Transverse colon (tissue), 4 donors: ENCODE measurements at regions of chr1 and their contacts with region 1.

Region 1: GRCh38 chr1:95043141-95043980 is 29.4 kb downstream of the ALG14 start:
- DNase-seq: peak; percentile 87
- H3K4me3 ChIP-seq: no peak overlapping the region
- H3K27ac ChIP-seq: peak overlapping the region; percentile 65 to 83 (median 75)
- H3K4me1 ChIP-seq: peaks cover 10 to 29% (median 14%) of the 10 kb centered on the region in 4 donors
- H3K27me3 ChIP-seq: no peaks in the 10 kb centered on the region
- CTCF ChIP-seq: peak; percentile 97 to 100 (median 99)
- EP300 ChIP-seq: no peak
- POLR2A ChIP-seq: no peak

Region 2: DNA sequence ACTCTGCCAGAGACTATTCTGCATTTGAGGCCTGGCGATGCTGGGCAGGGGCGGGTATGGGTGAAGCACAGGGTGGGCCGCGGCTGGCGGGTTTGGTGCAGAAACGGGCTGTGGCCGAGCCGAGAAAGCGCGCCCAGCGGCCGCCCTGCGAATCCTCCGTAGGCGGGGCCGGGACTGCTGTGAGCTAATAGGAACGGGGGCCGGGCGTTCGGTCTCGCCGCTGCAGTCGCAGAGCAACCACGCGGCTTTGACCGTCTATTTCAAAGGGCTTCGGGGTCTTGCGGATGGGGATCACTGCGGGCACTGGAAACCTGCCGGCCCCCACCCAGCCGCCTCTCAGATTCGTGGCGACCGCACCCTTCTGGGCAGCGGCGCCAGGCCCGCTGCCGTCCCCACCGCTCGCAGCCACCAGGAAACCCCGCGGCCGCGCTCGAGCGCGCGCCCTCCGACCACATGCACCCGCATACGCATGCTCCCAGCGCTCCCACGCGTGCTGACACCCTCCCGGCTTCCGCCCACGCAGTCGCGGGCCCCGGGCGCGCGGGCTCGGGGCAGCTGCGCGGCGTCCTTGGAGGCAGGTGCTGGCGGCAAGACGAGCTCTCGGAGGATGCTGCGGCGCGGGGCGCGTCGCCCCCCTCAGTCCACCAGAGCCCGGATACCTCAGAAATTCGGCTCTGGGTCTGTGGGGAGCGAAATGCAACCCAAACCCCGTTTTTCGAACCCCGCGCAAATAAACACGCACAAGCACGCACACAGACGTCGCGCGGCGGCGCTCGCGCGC is 1197.0 kb before region 1 on chr1:
- in situ Hi-C with region 1: no loop called
- intact Hi-C with region 1: loop called (anchors 5 kb)
- DNase-seq: peak; percentile 91
- H3K4me3 ChIP-seq: peak overlapping the region; percentile 54 to 89 (median 80)
- H3K27ac ChIP-seq: peak overlapping the region; percentile 94 to 100 (median 98)
- H3K4me1 ChIP-seq: peaks cover 11 to 30% (median 20%) of the 10 kb centered on the region in 4 donors
- H3K27me3 ChIP-seq: no peaks in the 10 kb centered on the region
- CTCF ChIP-seq: peak; percentile 32 to 66 (median 47)
- EP300 ChIP-seq: no peak
- POLR2A ChIP-seq: peak; percentile 77

Region 3: GRCh38 chr1:94514095-94514727 is 529.1 kb before region 1 on chr1:
- in situ Hi-C with region 1: loop called in 2 of 4 experiments (anchors 25 kb)
- intact Hi-C with region 1: no loop called
- DNase-seq: no peak
- H3K4me3 ChIP-seq: no peak overlapping the region
- H3K27ac ChIP-seq: no peak overlapping the region
- H3K4me1 ChIP-seq: no peaks in the 10 kb centered on the region
- H3K27me3 ChIP-seq: no peaks in the 10 kb centered on the region
- CTCF ChIP-seq: peak; percentile 46 to 62 (median 50)
- EP300 ChIP-seq: no peak
- POLR2A ChIP-seq: no peak

Region 4: DNA sequence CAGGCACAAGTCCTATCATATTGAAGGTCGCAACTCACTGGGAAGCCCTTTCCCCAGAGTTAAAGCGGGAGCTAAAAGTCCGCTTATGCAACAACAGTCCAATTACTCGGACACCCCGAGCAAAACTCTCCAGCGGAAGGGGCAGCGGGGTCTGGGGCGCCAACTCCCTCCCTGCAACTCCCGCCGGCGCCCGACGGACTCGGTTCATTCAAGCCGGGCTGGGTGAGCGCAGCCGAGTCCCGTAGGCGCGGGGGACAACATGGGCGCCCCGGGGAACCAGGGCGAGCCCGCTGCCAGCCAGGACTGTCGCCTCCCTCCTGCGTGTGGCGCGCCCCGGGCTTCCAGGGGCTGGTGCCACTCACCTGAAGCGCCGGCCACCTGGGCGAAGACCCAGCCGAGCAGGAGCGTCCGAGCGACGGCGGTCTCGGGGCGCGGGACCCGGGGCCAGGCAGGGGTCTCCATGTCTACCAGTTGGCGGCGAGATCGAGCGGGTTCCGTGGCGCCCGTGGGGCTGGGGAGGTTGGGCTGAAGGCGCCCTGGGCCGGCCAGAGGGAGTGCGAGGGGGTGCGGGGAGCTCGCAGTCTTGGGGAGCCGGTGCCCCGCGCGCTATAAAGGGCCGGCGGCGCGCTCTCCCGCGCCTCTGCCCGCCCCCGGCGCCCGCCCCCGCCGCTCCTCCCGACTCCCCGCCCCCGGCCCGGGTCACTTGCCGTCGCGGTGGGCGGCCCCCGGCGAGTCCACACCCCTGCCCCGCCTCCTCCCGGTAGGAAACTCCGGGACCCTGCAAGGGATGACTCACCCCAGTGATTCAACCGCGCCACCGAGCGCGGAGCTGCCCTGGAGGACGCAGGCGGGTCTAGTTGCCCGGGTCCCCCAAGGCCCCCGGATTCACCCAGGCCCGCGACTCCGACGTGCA is 501.9 kb before region 1 on chr1 and contains the start of gene F3:
- in situ Hi-C with region 1: loop called in 1 of 4 experiments (anchors 25 kb)
- intact Hi-C with region 1: no loop called
- DNase-seq: peak; percentile 95
- H3K4me3 ChIP-seq: peak within 1 kb of the TSS; percentile 62 to 89 (median 76)
- H3K27ac ChIP-seq: peak within 1 kb of the TSS; percentile 85 to 94 (median 90)
- H3K4me1 ChIP-seq: peaks cover 6 to 17% (median 11%) of the 10 kb centered on the region in 4 donors
- H3K27me3 ChIP-seq: no peaks in the 10 kb centered on the region
- CTCF ChIP-seq: peak in 1 of 5 experiments; percentile 7
- EP300 ChIP-seq: no peak
- POLR2A ChIP-seq: peak; percentile 95
- total RNA-seq, gene F3: 35.9 to 105 (median 59.3) TPM

Region 5: GRCh38 chr1:94854458-94855306 is 188.7 kb before region 1 on chr1:
- in situ Hi-C with region 1: loop called (anchors 5 to 10 kb)
- intact Hi-C with region 1: loop called (anchors 2 kb)
- DNase-seq: peak; percentile 88
- H3K4me3 ChIP-seq: peak overlapping the region in 3 of 4 donors; percentile 23 to 48 (median 26)
- H3K27ac ChIP-seq: peak overlapping the region; percentile 73 to 87 (median 82)
- H3K4me1 ChIP-seq: peaks cover 4 to 24% (median 14%) of the 10 kb centered on the region in 4 donors
- H3K27me3 ChIP-seq: no peaks in the 10 kb centered on the region
- CTCF ChIP-seq: peak; percentile 82 to 97 (median 87)
- EP300 ChIP-seq: no peak
- POLR2A ChIP-seq: no peak

Region 6: DNA sequence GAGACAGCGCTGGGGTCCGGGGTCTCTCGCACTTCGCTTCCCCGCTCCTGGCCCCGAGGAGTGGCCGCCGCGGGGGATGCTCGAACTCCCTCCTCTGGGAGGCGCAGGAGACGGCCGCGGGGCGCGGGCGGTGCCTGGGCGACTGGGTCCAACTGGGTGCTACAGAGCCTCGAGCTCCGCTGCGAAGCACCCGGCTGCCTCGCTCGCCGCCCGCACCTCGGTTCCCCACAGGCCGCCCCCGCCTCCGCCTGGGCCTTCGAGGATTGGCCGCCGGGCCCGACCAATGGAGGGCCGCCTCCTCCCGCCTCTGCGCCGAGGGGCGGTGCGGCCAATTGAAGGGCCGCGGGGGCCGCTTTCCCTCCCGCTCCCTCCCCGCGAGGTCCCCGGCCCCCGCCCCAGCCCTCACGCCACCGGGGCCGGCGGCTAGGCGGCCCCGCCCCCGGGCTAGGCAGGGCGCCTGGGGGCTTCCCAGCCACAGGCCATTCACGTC is 116.4 kb before region 1 on chr1 and contains the start of gene CNN3:
- in situ Hi-C with region 1: loop called in 1 of 4 experiments (anchors 25 kb)
- intact Hi-C with region 1: no loop called
- DNase-seq: peak; percentile 94
- H3K4me3 ChIP-seq: peak within 1 kb of the TSS; percentile 81 to 89 (median 84)
- H3K27ac ChIP-seq: peak within 1 kb of the TSS; percentile 96 to 99 (median 98)
- H3K4me1 ChIP-seq: peaks cover 10 to 76% (median 62%) of the 10 kb centered on the region in 4 donors
- H3K27me3 ChIP-seq: no peaks in the 10 kb centered on the region
- CTCF ChIP-seq: no peak
- EP300 ChIP-seq: no peak
- POLR2A ChIP-seq: peak; percentile 98
- total RNA-seq, gene CNN3: 22.4 to 96.2 (median 59.7) TPM

Region 7: DNA sequence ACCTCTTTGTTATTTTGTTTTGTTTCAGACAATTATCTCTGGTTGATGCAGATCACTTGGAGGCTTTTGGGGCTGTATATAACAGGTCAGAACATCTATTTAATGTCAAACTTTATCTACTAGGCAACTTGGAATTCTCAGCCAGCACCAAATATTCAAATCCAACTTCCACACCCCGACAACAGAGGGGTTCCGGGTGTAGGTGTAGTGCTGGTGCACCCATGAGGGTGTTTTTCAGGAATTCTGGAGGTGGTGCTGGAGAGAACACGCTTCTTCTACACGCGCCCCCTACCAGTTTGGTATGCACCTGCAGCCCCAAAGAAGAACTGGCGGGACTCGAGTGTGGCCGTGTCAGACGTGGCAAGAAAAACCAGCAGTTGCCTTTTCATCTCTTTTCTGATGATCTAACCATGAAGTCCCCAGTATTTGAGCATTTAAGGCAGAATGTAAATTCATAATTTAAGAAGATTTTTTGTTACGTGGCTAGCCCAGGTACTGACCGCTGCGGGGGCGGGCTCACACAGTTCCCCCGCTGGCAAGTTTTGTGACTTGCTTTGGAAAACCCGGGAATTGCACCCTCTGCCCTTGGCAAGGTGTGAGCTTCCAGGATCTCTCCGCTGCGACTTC is 73.3 kb after region 1 on chr1:
- in situ Hi-C with region 1: no loop called
- intact Hi-C with region 1: no loop called
- DNase-seq: peak; percentile 79
- H3K4me3 ChIP-seq: peak overlapping the region; percentile 71 to 95 (median 81)
- H3K27ac ChIP-seq: peak overlapping the region; percentile 87 to 90 (median 88)
- H3K4me1 ChIP-seq: peaks cover 0 to 18% (median 9%) of the 10 kb centered on the region in 4 donors
- H3K27me3 ChIP-seq: no peaks in the 10 kb centered on the region
- CTCF ChIP-seq: peak; percentile 69 to 89 (median 78)
- EP300 ChIP-seq: no peak
- POLR2A ChIP-seq: no peak

Region 8: DNA sequence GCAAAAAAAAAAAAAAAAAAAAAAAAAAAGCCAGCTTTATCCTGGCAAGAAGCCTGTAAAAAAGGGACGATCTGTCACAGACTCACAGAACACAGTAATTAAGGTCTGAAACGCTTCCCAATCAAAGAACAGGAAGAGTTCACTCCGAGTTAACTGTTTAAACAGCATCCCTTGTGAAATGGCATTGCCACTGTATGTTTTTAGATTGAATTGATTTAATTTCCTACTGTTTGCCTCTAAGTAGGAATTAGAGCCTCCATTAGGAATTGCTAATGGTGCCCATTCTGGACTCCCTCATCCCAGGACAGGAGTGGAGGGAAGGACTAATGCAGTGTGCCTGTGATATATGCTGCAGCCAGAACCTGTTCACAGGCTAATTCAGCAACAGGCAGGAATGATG is 561.4 kb after region 1 on chr1:
- in situ Hi-C with region 1: no loop called
- intact Hi-C with region 1: no loop called
- DNase-seq: no peak
- H3K4me3 ChIP-seq: no peak overlapping the region
- H3K27ac ChIP-seq: no peak overlapping the region
- H3K4me1 ChIP-seq: no peaks in the 10 kb centered on the region
- H3K27me3 ChIP-seq: no peaks in the 10 kb centered on the region
- CTCF ChIP-seq: no peak
- EP300 ChIP-seq: no peak
- POLR2A ChIP-seq: no peak